Calu3 (cell line): ENCODE measurements at regions of chr6 and their contacts with region 1.

Region 1: GRCh38 chr6:140915103-140915502 is 1217.6 kb upstream of the GJE1 start:
- DNase-seq: no peak
- H3K4me3 Mint-ChIP-seq: no peak overlapping the region
- H3K27ac Mint-ChIP-seq: no peak overlapping the region
- H3K4me1 Mint-ChIP-seq: peaks cover 15% of the 10 kb centered on the region
- H3K27me3 Mint-ChIP-seq: no peaks in the 10 kb centered on the region
- CTCF ChIP-seq: no peak

Region 2: GRCh38 chr6:140486114-140486767 is 428.9 kb before region 1 on chr6:
- CTCF ChIA-PET with region 1: no interaction called
- intact Hi-C with region 1: loop called (anchors 10 kb)
- DNase-seq: peak; percentile 21
- H3K4me3 Mint-ChIP-seq: no peak overlapping the region
- H3K27ac Mint-ChIP-seq: peak overlapping the region; percentile 33
- H3K4me1 Mint-ChIP-seq: peaks cover 24% of the 10 kb centered on the region
- H3K27me3 Mint-ChIP-seq: no peaks in the 10 kb centered on the region
- CTCF ChIP-seq: no peak

Region 3: DNA sequence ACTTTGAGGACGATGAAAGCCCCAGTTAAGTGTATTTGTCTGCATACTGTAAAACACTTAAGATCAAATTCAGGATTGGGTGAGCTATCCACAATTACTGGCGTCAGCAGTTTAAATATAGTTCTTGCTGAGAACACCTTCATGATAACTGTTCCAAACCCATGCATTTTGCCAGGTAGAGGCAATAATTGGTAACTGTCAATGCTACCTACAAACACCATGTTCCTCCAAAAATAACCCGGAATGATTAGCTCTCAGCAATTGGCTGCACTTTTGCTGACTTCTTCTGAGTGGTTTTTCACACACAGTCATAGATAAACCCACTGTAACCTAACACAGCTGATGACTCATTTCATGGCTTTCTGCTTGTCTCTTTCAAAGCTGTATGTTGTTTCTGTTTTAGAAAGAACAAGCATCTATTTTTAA is 141.0 kb before region 1 on chr6:
- CTCF ChIA-PET with region 1: interaction called, 3 read pairs
- intact Hi-C with region 1: loop called (anchors 10 kb)
- DNase-seq: peak; percentile 0
- H3K4me3 Mint-ChIP-seq: no peak overlapping the region
- H3K27ac Mint-ChIP-seq: no peak overlapping the region
- H3K4me1 Mint-ChIP-seq: peaks cover 18% of the 10 kb centered on the region
- H3K27me3 Mint-ChIP-seq: no peaks in the 10 kb centered on the region
- CTCF ChIP-seq: no peak

Region 4: GRCh38 chr6:140956571-140957369 is 41.7 kb after region 1 on chr6:
- CTCF ChIA-PET with region 1: no interaction called
- intact Hi-C with region 1: no loop called
- DNase-seq: no peak
- H3K4me3 Mint-ChIP-seq: no peak overlapping the region
- H3K27ac Mint-ChIP-seq: no peak overlapping the region
- H3K4me1 Mint-ChIP-seq: no peaks in the 10 kb centered on the region
- H3K27me3 Mint-ChIP-seq: no peaks in the 10 kb centered on the region
- CTCF ChIP-seq: no peak